ENCODE measurements at regions of chr12 and their contacts with region 1.

Region 1: DNA sequence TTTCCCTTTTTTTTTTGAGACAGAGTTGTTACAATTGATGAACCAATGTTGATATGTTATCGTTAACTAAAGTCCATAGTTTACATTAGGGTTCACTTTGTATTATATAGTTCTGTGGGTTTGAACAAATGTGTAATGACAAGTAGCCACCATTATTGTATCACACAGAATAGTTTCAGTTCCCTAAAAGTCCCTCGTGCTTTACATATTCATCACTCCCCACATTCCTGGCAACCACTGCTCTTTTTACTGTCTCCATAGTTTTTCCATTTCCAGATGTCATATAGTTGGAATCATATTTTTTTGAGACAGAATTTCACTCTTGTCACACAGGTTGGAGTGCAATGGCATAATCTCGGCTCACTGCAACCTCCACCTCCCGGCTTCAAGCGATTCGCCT is 12.5 kb downstream of the HSD17B6 start:
- DNase-seq: no peak
- H3K4me3 ChIP-seq: no peak overlapping the region
- H3K27ac ChIP-seq: no peak overlapping the region
- H3K4me1 ChIP-seq: peaks cover 3% of the 10 kb centered on the region
- H3K27me3 ChIP-seq: no peaks in the 10 kb centered on the region
- CTCF ChIP-seq: no peak
- POLR2A ChIP-seq: no peak

Region 2: GRCh38 chr12:56998981-56999380 is 223.3 kb after region 1 on chr12:
- intact Hi-C with region 1: loop called (anchors 10 kb)
- DNase-seq: no peak
- H3K4me3 ChIP-seq: no peak overlapping the region
- H3K27ac ChIP-seq: no peak overlapping the region
- H3K4me1 ChIP-seq: peaks cover 8% of the 10 kb centered on the region
- H3K27me3 ChIP-seq: no peaks in the 10 kb centered on the region
- CTCF ChIP-seq: no peak
- POLR2A ChIP-seq: no peak

Region 3: GRCh38 chr12:57138526-57139272 is 363.1 kb after region 1 on chr12:
- intact Hi-C with region 1: no loop called
- DNase-seq: no peak
- H3K4me3 ChIP-seq: no peak overlapping the region
- H3K27ac ChIP-seq: peak overlapping the region in 1 of 2 donors; percentile 17
- H3K4me1 ChIP-seq: peaks cover 65% of the 10 kb centered on the region
- H3K27me3 ChIP-seq: no peaks in the 10 kb centered on the region
- CTCF ChIP-seq: no peak
- POLR2A ChIP-seq: no peak

Measured in testis (tissue), 5 donors.